ENCODE measurements at regions of chr6 and their contacts with region 1.

Region 1: DNA sequence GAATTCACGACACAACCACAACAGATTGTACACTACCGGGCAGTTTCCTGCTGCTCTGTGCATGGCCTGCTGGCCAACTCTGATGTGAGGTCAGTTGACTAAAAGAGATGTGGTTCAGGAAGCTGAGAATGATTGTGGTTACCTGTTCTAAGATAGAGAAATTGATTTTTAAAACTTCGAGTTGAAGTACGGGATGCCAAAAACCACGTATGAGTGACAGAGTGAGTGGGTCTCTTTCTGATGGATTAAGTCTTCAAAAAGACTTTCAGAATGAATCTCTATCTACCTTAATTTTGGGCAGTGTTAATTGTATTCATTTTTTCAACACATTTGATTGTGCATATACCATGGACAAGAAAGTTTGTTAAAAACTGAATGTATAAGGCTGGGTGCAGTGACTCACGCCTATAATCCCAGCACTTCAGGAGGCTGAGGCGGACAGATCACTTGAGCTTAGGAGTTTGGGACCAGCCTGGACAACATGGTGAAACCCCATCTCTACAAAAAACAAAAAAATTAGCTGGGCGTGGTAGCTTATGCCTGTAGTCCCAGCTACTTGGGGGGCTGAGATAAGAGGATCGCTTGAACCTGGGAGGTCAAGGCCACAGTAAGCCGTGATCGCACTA is 121.2 kb downstream of the SGK1 start:
- DNase-seq: no peak
- H3K4me3 Mint-ChIP-seq: no peak overlapping the region
- H3K27ac Mint-ChIP-seq: no peak overlapping the region
- H3K4me1 Mint-ChIP-seq: peaks cover 9% of the 10 kb centered on the region
- H3K27me3 Mint-ChIP-seq: no peaks in the 10 kb centered on the region

Region 2: DNA sequence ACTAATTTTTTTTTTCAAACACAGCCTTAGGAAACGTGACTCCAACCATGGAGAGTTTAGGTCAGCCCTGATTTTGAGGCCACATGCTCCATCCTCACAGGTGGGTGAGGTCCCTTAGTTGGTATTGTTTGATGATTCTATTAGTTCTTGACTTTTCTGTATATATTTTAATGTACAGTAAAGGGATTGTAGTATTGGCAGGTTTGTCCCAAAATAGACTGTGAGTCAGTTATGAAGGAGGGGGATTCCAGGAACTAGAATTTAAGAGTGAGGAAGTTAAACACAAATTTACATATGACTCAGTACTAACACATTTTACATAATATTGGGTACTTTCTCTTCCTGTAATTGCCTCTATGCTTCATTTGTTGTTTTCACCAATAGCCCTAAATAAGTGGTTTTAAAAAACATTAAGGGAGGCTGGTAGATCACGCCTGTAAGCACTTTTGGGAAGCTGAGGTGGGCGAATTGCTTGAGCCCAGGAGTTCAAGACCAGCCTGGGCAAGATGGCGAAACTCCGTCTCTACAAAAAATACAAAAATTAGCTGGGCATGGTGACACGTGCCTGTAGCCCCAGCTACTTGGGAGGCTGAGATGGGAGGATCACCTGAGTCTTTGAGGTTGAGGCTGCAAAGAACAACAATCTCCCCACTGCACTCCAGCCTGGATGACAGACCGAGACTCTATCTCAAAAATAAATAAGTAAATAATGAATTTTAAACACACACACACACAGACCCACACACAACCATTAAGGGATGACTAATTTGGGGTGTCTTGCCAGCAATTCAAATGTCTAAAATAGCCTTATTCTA is 39.5 kb after region 1 on chr6:
- CTCF ChIA-PET with region 1: no interaction called
- POLR2A ChIA-PET with region 1: no interaction called
- intact Hi-C with region 1: loop called (anchors 5 kb)
- DNase-seq: peak; percentile 22
- H3K4me3 Mint-ChIP-seq: peak overlapping the region; percentile 29
- H3K27ac Mint-ChIP-seq: peak overlapping the region; percentile 85
- H3K4me1 Mint-ChIP-seq: peaks cover 41% of the 10 kb centered on the region
- H3K27me3 Mint-ChIP-seq: no peaks in the 10 kb centered on the region

Measured in activated CD4-positive, alpha-beta memory T cell treated with anti-CD3 and anti-CD28 coated beads for 36 hours (primary cell).